Ovary (tissue), 10 donors: ENCODE measurements at regions of chr19 and their contacts with region 1.

Region 1: GRCh38 chr19:36772311-36773222 is at the start of gene ZNF850:
- DNase-seq: peak; percentile 95 to 98 (median 95)
- H3K4me3 ChIP-seq: peak within 1 kb of the TSS; percentile 81
- H3K27ac ChIP-seq: peak within 1 kb of the TSS; percentile 39 to 78
- H3K4me1 ChIP-seq: no peaks in the 10 kb centered on the region
- H3K27me3 ChIP-seq: no peaks in the 10 kb centered on the region
- CTCF ChIP-seq: no peak
- EP300 ChIP-seq: no peak
- POLR2A ChIP-seq: no peak
- total RNA-seq, gene ZNF850: 2.8 to 10.1 (median 7.4) TPM

Region 2: GRCh38 chr19:36363845-36364244 is 408.7 kb before region 1 on chr19:
- intact Hi-C with region 1: no loop called
- DNase-seq: no peak
- H3K4me3 ChIP-seq: no peak overlapping the region
- H3K27ac ChIP-seq: no peak overlapping the region
- H3K4me1 ChIP-seq: no peaks in the 10 kb centered on the region
- H3K27me3 ChIP-seq: no peaks in the 10 kb centered on the region
- CTCF ChIP-seq: no peak
- EP300 ChIP-seq: no peak
- POLR2A ChIP-seq: no peak

Region 3: GRCh38 chr19:36796076-36796992 is 23.8 kb after region 1 on chr19:
- intact Hi-C with region 1: loop called in 1 of 4 experiments (anchors 2 kb)
- DNase-seq: peak in 2 of 5 donors; percentile 27 to 28
- H3K4me3 ChIP-seq: peak overlapping the region; percentile 89
- H3K27ac ChIP-seq: peak overlapping the region in 1 of 2 donors; percentile 29
- H3K4me1 ChIP-seq: peaks cover 3% of the 10 kb centered on the region
- H3K27me3 ChIP-seq: no peaks in the 10 kb centered on the region
- CTCF ChIP-seq: no peak
- EP300 ChIP-seq: no peak
- POLR2A ChIP-seq: no peak